PC-9 (cell line): ENCODE measurements at regions of chrX and their contacts with region 1.

Region 1: DNA sequence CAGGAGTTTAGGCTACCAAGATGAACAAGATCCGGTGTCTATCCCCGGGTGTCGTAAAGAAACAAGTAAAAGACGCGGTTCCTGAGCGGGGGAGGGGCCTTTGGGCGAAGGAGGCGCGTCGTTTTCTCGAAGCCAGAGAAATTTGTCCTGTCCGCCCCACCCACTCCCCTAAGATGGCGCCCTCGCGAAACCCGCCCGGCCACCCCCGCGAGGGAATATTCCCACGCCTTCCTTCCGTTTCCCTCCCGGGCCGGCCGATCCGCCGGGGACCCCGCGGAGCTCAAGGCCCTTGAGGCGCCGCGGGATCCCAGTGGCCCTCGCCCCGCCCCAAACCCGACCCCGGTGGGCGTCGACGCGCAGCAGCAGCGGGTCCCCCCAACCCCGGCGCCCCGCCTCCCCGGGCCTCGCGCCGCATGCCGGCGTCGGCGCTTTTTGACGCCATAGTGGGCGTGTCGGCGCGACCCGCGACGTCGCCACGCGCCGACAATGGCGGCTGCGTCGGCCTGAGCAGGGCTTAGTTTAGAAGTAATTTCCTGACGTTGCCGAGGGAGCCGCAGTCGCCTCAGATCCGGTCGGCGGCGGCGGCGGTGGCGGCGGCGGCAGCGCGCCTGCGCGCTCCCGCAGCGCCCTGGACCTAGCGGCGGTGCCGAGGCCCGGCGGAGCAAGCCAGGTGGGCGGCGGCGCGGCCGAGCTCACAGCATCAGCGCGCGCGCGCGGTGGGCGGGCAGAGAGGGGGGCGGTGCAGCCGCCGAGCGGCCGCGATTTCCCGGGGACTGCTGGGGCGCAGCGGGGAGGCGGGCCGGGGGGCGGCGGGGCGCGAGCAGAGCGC is at the start of gene HTATSF1:
- DNase-seq: peak; percentile 84 to 87
- H3K4me3 ChIP-seq: peak within 1 kb of the TSS; percentile 93
- H3K27ac ChIP-seq: peak within 1 kb of the TSS; percentile 94
- H3K4me1 ChIP-seq: peaks cover 23% of the 10 kb centered on the region
- H3K27me3 ChIP-seq: no peaks in the 10 kb centered on the region
- CTCF ChIP-seq: no peak
- total RNA-seq, gene HTATSF1: 64.3 and 72.4 TPM in 2 replicates

Region 2: DNA sequence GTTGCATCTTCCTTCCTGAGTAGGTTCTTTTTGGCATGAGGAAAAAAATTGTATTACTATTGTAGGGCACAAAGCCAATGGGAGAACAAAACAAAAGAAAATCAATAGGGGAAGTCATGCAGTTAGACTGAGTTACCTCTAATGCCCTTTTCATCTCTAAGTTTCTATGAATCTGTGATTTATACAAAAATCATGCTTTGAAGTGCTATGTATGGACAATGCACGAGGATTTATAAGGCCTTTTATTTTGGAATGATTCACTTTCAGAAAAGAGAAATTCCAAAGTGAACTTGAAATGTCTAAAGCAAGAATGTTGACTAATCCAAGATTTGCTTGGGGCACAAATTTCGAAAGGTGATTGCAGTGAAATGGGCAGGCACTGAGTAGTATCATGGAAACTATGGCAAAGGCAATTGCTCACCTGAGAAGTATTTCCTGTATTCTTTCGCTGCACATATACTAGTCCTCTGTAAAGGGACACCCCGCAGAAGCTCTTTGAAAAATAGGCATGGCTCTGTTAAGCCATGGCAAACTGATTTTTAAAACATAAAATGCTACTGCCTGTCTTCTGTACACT is 143.4 kb before region 1 on chrX:
- CTCF ChIA-PET with region 1: interaction called, 3 read pairs
- POLR2A ChIA-PET with region 1: no interaction called
- intact Hi-C with region 1: loop called (anchors 2 kb)
- DNase-seq: peak; percentile 61 to 99
- H3K4me3 ChIP-seq: no peak overlapping the region
- H3K27ac ChIP-seq: peak overlapping the region; percentile 95
- H3K4me1 ChIP-seq: peaks cover 38% of the 10 kb centered on the region
- H3K27me3 ChIP-seq: no peaks in the 10 kb centered on the region
- CTCF ChIP-seq: no peak

Region 3: DNA sequence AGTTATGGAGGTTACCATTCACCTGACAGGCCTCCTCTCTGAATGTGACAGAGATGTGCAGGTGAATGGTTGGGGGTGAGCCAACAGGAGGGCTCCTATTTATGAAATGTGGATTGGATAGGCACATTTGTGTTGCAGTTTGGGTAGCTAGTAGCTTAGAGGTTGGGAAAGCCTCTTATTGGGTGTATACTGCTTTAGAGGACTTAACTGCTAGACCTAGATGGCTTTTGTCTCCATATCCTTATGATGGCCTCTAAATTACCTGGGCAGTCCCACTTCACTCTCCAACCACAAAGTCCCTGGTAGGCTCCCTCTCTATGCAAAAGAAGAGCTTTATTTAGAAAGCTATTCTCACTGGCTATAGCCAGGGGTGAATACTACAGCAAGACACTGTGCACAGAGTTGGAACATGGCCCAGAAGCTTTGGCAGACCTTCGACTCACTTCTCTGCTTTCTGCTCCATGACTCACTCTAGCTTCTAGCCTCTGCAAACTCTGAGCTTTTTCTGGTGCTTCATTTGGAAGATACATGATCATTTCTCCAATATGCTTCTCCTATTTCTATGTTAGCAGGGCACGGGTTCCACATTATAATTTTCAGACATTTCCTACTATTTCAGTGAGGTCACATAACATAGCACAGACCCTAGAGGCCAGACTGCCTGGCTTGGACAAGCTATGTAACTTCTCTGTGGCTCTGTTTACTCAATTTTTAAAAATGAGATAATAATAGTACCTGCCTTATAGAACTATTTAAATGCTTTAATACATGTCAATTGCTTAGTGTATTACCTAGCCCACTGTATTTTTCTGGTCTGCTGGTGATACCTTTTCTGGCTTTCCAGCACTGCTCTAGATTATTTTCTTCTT is 29.0 kb after region 1 on chrX:
- CTCF ChIA-PET with region 1: no interaction called
- POLR2A ChIA-PET with region 1: interaction called, 10 read pairs
- intact Hi-C with region 1: no loop called
- DNase-seq: peak; percentile 80 to 96
- H3K4me3 ChIP-seq: peak overlapping the region; percentile 36; the same call in 1 of the 2 replicates
- H3K27ac ChIP-seq: peak overlapping the region; percentile 86
- H3K4me1 ChIP-seq: peaks cover 64% of the 10 kb centered on the region
- H3K27me3 ChIP-seq: no peaks in the 10 kb centered on the region
- CTCF ChIP-seq: no peak

Region 4: DNA sequence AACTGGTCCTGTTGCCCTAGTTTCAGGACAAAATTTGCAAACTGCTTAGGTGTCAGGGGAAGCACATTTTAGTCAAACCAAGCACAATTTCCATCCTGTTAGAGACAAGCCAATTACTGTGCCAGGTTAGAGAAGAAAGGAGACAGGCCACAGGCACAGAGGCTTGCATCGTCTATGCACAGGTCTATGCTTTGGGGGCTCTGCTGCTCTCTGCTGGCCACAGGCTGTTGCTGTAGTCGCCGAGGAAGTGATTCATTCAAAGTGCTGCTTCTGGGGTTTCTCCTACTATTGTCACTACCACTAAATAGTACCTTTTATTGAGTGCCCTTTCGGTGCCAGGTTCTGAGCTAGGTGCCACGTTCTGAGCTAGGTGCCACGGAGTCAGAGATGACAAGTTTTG is 80.6 kb after region 1 on chrX:
- CTCF ChIA-PET with region 1: no interaction called
- POLR2A ChIA-PET with region 1: interaction called, 4 read pairs
- intact Hi-C with region 1: loop called (anchors 1 kb)
- DNase-seq: peak in 1 of 2 experiments; percentile 68
- H3K4me3 ChIP-seq: no peak overlapping the region
- H3K27ac ChIP-seq: no peak overlapping the region
- H3K4me1 ChIP-seq: peaks cover 15% of the 10 kb centered on the region
- H3K27me3 ChIP-seq: no peaks in the 10 kb centered on the region
- CTCF ChIP-seq: peak; percentile 74